ENCODE measurements at regions of chr15 and their contacts with region 1.

Region 1: GRCh38 chr15:79989682-79990081 is 18.7 kb upstream of the BCL2A1 start:
- DNase-seq: no peak
- ATAC-seq: no peak
- H3K4me3 Mint-ChIP-seq: no peak overlapping the region
- H3K27ac Mint-ChIP-seq: no peak overlapping the region
- H3K4me1 Mint-ChIP-seq: peaks cover 35% of the 10 kb centered on the region
- H3K27me3 Mint-ChIP-seq: no peaks in the 10 kb centered on the region
- CTCF ChIP-seq: no peak

Region 2: DNA sequence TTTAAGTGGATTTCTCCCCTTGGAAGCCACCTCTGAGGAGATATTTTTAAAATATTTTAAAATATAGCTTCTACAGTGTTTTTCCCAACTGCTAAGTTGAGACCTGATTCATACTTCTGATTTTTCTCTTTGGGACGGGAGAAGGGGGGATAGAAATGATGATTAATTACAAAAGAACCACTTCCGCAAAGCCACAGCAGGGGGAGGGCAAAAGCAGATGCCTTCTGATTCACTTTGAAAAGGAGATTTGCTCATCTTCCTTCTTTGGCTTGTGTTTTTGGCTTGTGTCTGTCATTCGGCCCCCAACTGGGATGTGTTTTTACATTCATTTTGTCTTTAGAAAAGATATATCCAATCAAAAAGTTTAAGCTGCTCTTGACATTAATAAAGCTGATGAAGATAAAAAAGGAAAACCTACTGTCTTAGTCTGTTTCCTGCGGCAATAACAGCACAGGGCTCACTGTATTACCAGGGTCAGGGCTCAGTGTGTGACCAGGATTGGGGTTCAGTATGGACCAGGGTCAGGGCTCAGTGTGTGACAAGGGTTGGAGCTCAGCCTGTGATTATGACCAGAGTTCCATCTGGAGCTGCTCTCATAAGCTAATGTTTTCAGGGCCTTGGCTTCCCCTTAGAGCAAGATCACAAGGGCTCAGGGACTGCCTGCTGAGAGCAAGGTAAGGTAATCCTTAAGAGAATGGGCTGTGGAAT is 316.1 kb before region 1 on chr15:
- CTCF ChIA-PET with region 1: no interaction called
- POLR2A ChIA-PET with region 1: no interaction called
- intact Hi-C with region 1: loop called (anchors 10 kb)
- DNase-seq: no peak
- ATAC-seq: peak; percentile 83
- H3K4me3 Mint-ChIP-seq: no peak overlapping the region
- H3K27ac Mint-ChIP-seq: no peak overlapping the region
- H3K4me1 Mint-ChIP-seq: peaks cover 5% of the 10 kb centered on the region
- H3K27me3 Mint-ChIP-seq: peaks cover 13% of the 10 kb centered on the region
- CTCF ChIP-seq: no peak

Region 3: DNA sequence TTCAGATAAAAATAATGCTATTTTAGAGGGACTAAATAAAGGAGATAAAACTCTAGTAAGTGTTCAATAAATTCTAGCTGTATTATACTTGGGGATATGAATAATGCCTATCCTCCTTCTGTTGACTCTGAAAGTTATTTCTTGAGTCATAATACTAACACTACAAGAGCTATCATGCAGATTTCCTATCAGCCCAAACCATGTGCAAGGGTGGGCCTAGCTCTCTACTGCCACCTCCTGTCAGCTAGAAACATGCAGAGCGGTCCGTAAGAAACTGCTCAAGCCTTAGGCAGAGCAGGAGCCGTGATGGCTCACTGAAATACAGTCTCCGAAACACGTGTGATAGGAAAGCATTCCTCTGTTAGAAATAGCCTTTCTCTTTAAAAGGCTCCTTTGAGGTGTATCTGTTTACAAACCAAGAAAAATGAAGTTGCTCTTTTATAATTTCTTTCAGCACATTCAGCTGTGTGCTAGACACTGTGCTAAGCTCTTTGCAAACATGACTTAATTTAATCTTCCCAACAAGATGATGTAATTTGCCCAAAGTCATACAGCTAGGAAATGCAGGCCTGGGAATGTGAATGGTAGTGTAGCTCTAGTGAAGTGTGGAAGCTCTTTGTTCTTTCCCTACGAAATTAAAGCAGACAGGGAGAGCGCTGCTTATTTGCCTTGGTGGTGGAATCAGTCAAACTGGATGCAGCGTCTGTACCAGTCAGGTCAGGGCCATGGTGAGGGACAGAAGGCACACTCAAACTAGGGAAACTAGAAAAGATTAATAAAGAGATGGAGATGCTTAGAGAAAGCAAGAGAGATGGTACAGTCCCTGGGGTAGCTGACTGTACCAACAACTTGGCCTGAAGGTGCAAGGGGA is 136.0 kb before region 1 on chr15:
- CTCF ChIA-PET with region 1: interaction called, 39 read pairs
- POLR2A ChIA-PET with region 1: no interaction called
- intact Hi-C with region 1: loop called (anchors 1 kb)
- DNase-seq: peak; percentile 20
- ATAC-seq: peak; percentile 99
- H3K4me3 Mint-ChIP-seq: no peak overlapping the region
- H3K27ac Mint-ChIP-seq: no peak overlapping the region
- H3K4me1 Mint-ChIP-seq: peaks cover 23% of the 10 kb centered on the region
- H3K27me3 Mint-ChIP-seq: no peaks in the 10 kb centered on the region
- CTCF ChIP-seq: peak; percentile 76

Region 4: GRCh38 chr15:79901958-79902357 is 87.7 kb before region 1 on chr15:
- CTCF ChIA-PET with region 1: interaction called, 13 read pairs
- POLR2A ChIA-PET with region 1: interaction called, 5 read pairs
- intact Hi-C with region 1: loop called (anchors 1 kb)
- DNase-seq: no peak
- ATAC-seq: no peak
- H3K4me3 Mint-ChIP-seq: no peak overlapping the region
- H3K27ac Mint-ChIP-seq: no peak overlapping the region
- H3K4me1 Mint-ChIP-seq: peaks cover 61% of the 10 kb centered on the region
- H3K27me3 Mint-ChIP-seq: no peaks in the 10 kb centered on the region
- CTCF ChIP-seq: no peak

Region 5: GRCh38 chr15:79970624-79971434 is 18.9 kb before region 1 on chr15 and contains the start of gene BCL2A1:
- CTCF ChIA-PET with region 1: no interaction called
- POLR2A ChIA-PET with region 1: interaction called, 5 read pairs
- intact Hi-C with region 1: loop called (anchors 1 kb)
- DNase-seq: peak; percentile 33
- ATAC-seq: peak; percentile 83
- H3K4me3 Mint-ChIP-seq: peak within 1 kb of the TSS; percentile 89
- H3K27ac Mint-ChIP-seq: peak within 1 kb of the TSS; percentile 93
- H3K4me1 Mint-ChIP-seq: peaks cover 61% of the 10 kb centered on the region
- H3K27me3 Mint-ChIP-seq: no peaks in the 10 kb centered on the region
- CTCF ChIP-seq: no peak
- total RNA-seq, gene BCL2A1: 181 and 189 TPM in 2 replicates

Region 6: GRCh38 chr15:80173022-80173759 is 183.5 kb after region 1 on chr15:
- CTCF ChIA-PET with region 1: interaction called, 13 read pairs
- POLR2A ChIA-PET with region 1: no interaction called
- intact Hi-C with region 1: loop called (anchors 1 kb)
- DNase-seq: peak; percentile 59
- ATAC-seq: peak; percentile 85
- H3K4me3 Mint-ChIP-seq: no peak overlapping the region
- H3K27ac Mint-ChIP-seq: peak overlapping the region; percentile 35
- H3K4me1 Mint-ChIP-seq: no peaks in the 10 kb centered on the region
- H3K27me3 Mint-ChIP-seq: no peaks in the 10 kb centered on the region
- CTCF ChIP-seq: no peak

Region 7: GRCh38 chr15:80455668-80456442 is 466.2 kb after region 1 on chr15:
- CTCF ChIA-PET with region 1: no interaction called
- POLR2A ChIA-PET with region 1: no interaction called
- intact Hi-C with region 1: no loop called
- DNase-seq: peak; percentile 23
- ATAC-seq: peak; percentile 73
- H3K4me3 Mint-ChIP-seq: no peak overlapping the region
- H3K27ac Mint-ChIP-seq: no peak overlapping the region
- H3K4me1 Mint-ChIP-seq: no peaks in the 10 kb centered on the region
- H3K27me3 Mint-ChIP-seq: peaks cover 7% of the 10 kb centered on the region
- CTCF ChIP-seq: peak; percentile 70

Measured in activated B cell treated with CpG ODN at 0.5 μM for 24 hours (primary cell).